ENCODE measurements at regions of chr11 and their contacts with region 1.

Region 1: DNA sequence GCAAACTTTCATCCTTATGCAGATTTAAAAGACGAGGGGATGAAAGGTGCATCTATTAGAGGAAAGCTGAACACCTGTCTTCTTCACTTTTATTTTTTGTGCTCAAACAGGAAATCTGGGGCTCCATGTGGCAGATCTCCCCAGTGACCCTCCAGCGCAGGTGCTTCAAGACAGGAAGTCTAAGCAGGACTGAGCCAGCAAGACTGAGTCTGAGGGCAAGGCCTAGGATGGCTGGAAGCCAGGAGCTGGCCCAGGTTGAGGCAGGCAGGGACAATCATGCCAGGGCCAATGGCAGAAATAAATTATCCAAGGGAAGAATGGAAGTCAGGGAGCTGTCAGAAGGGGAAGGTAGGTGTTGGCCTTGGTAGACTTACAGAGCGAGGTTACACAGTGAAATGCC is 101.1 kb upstream of the SPON1 start:
- DNase-seq: peak in 1 of 9 experiments; percentile 32
- ATAC-seq: peak; percentile 34
- H3K4me3 ChIP-seq: no peak overlapping the region
- H3K4me3 Mint-ChIP-seq: peak overlapping the region; percentile 16
- H3K27ac ChIP-seq: no peak overlapping the region
- H3K27ac Mint-ChIP-seq: peak overlapping the region; percentile 87
- H3K4me1 ChIP-seq: peaks cover 23% of the 10 kb centered on the region
- H3K4me1 Mint-ChIP-seq: peaks cover 26% of the 10 kb centered on the region
- H3K27me3 ChIP-seq: no peaks in the 10 kb centered on the region
- H3K27me3 Mint-ChIP-seq: no peaks in the 10 kb centered on the region
- CTCF ChIP-seq: no peak

Region 2: GRCh38 chr11:13907678-13908077 is 46.3 kb after region 1 on chr11:
- CTCF ChIA-PET with region 1: no interaction called
- POLR2A ChIA-PET with region 1: no interaction called
- intact Hi-C with region 1: no loop called
- DNase-seq: no peak
- ATAC-seq: no peak
- H3K4me3 ChIP-seq: no peak overlapping the region
- H3K4me3 Mint-ChIP-seq: no peak overlapping the region
- H3K27ac ChIP-seq: no peak overlapping the region
- H3K27ac Mint-ChIP-seq: no peak overlapping the region
- H3K4me1 ChIP-seq: no peaks in the 10 kb centered on the region
- H3K4me1 Mint-ChIP-seq: no peaks in the 10 kb centered on the region
- H3K27me3 ChIP-seq: no peaks in the 10 kb centered on the region
- H3K27me3 Mint-ChIP-seq: no peaks in the 10 kb centered on the region
- CTCF ChIP-seq: no peak

Region 3: DNA sequence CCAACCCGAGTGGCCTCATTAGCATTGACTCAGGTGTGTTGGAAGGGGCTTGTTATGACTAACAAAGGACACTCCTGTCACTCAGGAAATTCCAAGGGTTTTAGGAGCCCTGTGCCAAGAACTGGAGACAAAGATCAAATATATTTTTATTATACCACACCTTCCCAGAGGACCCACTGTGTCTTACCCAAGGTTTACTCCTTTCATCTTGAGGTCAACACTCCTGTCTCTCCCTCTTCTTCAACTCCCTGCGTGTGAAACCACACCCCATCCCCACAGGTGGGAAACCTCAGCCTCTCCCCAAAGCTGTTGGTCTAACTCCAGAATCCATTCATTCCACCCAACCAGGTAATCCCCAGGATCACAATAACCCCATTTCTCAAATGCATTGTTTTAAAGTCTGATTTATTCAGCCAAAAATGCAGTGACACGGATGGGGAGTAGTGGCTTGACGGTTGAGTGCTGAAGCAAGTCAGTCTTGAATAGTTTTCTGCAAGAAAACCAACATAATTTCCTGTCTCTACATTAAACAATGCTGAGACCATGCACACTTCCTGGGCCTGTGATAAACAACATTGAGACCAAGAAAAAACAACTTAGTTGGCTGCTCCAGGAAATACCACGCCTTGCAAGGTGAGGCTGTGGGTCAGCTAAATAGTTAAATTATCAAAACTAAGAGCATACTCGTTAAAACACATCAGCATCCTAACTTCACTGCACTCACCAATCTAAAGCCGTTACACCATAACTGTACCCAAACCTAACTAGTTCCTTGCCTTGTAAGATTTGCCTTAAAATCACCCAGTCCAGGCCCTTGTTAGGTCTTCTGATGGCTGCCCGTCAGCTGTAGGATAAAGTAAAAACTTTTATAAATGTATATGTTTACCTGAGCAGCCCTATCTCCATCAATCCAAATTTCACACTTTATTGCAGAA is 62.6 kb after region 1 on chr11:
- CTCF ChIA-PET with region 1: no interaction called
- POLR2A ChIA-PET with region 1: interaction called, 3 read pairs
- intact Hi-C with region 1: loop called in 1 of 2 experiments (anchors 5 kb)
- DNase-seq: peak in 8 of 9 experiments; percentile 19 to 66 (median 30)
- ATAC-seq: peak; percentile 93
- H3K4me3 ChIP-seq: peak overlapping the region; percentile 12
- H3K4me3 Mint-ChIP-seq: peak overlapping the region; percentile 70
- H3K27ac ChIP-seq: peak overlapping the region; percentile 32 to 86
- H3K27ac Mint-ChIP-seq: peak overlapping the region; percentile 96
- H3K4me1 ChIP-seq: peaks cover 49% of the 10 kb centered on the region
- H3K4me1 Mint-ChIP-seq: peaks cover 62% of the 10 kb centered on the region
- H3K27me3 ChIP-seq: no peaks in the 10 kb centered on the region
- H3K27me3 Mint-ChIP-seq: no peaks in the 10 kb centered on the region
- CTCF ChIP-seq: no peak

Region 4: DNA sequence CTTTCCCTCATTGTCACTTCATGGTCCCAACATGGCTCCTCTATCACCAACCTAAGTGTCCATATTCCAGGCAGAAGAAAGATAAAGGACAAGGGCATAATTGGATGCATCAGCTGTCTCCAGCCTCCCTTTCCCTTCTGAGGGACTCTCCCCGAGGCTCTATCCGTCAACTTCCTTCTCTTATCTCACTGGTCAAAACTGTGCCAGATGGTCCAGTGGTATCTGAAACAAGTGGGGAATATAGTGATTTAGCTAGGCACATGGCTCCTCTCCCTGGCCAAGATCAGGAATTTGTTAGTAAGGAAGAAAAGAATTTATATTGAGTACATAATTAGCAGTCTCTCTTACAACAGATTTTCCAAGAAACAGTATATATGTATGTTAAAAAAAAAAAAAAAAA is 88.5 kb after region 1 on chr11:
- CTCF ChIA-PET with region 1: interaction called, 4 read pairs
- POLR2A ChIA-PET with region 1: interaction called, 3 read pairs
- intact Hi-C with region 1: loop called in 1 of 2 experiments (anchors 5 kb)
- DNase-seq: no peak
- ATAC-seq: no peak
- H3K4me3 ChIP-seq: no peak overlapping the region
- H3K4me3 Mint-ChIP-seq: no peak overlapping the region
- H3K27ac ChIP-seq: no peak overlapping the region
- H3K27ac Mint-ChIP-seq: no peak overlapping the region
- H3K4me1 ChIP-seq: no peaks in the 10 kb centered on the region
- H3K4me1 Mint-ChIP-seq: peaks cover 11% of the 10 kb centered on the region
- H3K27me3 ChIP-seq: no peaks in the 10 kb centered on the region
- H3K27me3 Mint-ChIP-seq: no peaks in the 10 kb centered on the region
- CTCF ChIP-seq: no peak

Region 5: GRCh38 chr11:14148653-14149273 is 287.4 kb after region 1 on chr11:
- CTCF ChIA-PET with region 1: interaction called, 13 read pairs
- POLR2A ChIA-PET with region 1: no interaction called
- intact Hi-C with region 1: loop called (anchors 2 to 5 kb)
- DNase-seq: peak in 2 of 9 experiments; percentile 44 to 65
- ATAC-seq: peak; percentile 94
- H3K4me3 ChIP-seq: no peak overlapping the region
- H3K4me3 Mint-ChIP-seq: no peak overlapping the region
- H3K27ac ChIP-seq: no peak overlapping the region
- H3K27ac Mint-ChIP-seq: no peak overlapping the region
- H3K4me1 ChIP-seq: no peaks in the 10 kb centered on the region
- H3K4me1 Mint-ChIP-seq: peaks cover 3% of the 10 kb centered on the region
- H3K27me3 ChIP-seq: no peaks in the 10 kb centered on the region
- H3K27me3 Mint-ChIP-seq: no peaks in the 10 kb centered on the region
- CTCF ChIP-seq: peak; percentile 75

Region 6: GRCh38 chr11:14249121-14249963 is 387.9 kb after region 1 on chr11:
- CTCF ChIA-PET with region 1: interaction called, 12 read pairs
- POLR2A ChIA-PET with region 1: no interaction called
- intact Hi-C with region 1: loop called (anchors 1 to 2 kb)
- DNase-seq: peak; percentile 37 to 85 (median 73)
- ATAC-seq: peak; percentile 61
- H3K4me3 ChIP-seq: no peak overlapping the region
- H3K4me3 Mint-ChIP-seq: peak overlapping the region; percentile 61
- H3K27ac ChIP-seq: no peak overlapping the region
- H3K27ac Mint-ChIP-seq: no peak overlapping the region
- H3K4me1 ChIP-seq: peaks cover 16% of the 10 kb centered on the region
- H3K4me1 Mint-ChIP-seq: peaks cover 22% of the 10 kb centered on the region
- H3K27me3 ChIP-seq: no peaks in the 10 kb centered on the region
- H3K27me3 Mint-ChIP-seq: no peaks in the 10 kb centered on the region
- CTCF ChIP-seq: peak; percentile 98

Measured in CD8-positive, alpha-beta T cell (primary cell).